Activated CD8-positive, alpha-beta memory T cell treated with anti-CD3 and anti-CD28 coated beads, Interleukin-2, amount 10 ng/mL, durations not matched to agents 7 days and 5 days (primary cell): ENCODE measurements at regions of chr17 and their contacts with region 1.

Region 1: GRCh38 chr17:74368092-74369081 is 1.1 kb downstream of the GPR142 start:
- DNase-seq: peak; percentile 78
- ATAC-seq: peak; percentile 75
- H3K4me3 Mint-ChIP-seq: no peak overlapping the region
- H3K27ac Mint-ChIP-seq: no peak overlapping the region
- H3K4me1 Mint-ChIP-seq: peaks cover 12% of the 10 kb centered on the region
- H3K27me3 Mint-ChIP-seq: peaks cover under 1% of the 10 kb centered on the region

Region 2: DNA sequence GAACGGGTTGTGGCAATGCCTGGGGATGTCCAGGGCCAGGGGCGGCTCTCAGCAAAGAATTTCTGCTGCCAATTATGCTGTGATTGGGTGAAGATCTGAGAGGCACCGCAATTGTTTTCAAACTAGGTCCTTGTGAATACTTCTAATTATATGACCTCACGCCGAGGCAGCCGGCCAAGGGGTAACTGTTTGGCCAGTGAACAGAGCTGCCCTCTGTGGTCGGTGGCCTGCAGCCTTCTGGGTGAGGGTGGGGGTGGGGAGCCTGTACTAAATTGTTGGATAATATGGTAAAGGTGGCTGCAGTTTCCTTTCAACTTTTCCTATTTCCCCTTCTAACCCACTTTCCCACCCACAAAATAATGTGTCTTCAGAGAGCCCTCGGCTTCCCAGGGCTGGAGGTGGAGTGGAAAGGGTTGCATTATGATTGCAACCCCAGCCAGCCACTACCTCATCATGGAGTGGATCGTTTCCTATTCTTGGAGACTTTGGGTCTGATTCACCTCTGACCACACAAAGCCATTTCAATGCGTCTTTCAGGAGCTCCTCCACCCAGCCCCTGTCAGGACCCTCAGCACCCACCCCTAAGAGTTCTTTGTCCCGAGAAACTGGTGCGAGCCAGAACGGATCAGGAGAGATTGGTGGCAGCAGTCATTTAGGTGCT is 96.4 kb before region 1 on chr17:
- CTCF ChIA-PET with region 1: no interaction called
- DNase-seq: no peak
- ATAC-seq: no peak
- H3K4me3 Mint-ChIP-seq: no peak overlapping the region
- H3K27ac Mint-ChIP-seq: no peak overlapping the region
- H3K4me1 Mint-ChIP-seq: peaks cover 25% of the 10 kb centered on the region
- H3K27me3 Mint-ChIP-seq: peaks cover 10% of the 10 kb centered on the region

Region 3: DNA sequence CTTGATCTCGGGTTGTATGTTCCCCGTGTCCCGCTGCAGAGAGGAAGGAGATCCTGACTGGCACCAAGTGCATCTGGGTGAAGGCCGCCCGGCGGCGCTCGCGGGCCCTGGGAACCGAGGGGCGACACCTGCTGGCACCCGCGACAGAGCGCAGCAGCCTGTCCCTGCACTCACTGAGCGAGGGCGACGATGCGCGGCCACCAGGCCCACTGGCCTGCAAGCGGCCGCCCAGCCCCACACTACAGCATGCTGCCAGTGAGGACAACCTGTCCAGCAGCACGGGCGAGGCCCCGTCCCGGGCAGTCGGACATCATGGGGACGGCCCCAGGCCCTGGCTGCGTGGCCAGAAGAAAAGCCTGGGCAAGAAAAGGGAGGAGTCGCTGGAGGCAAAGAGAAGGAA is 14.3 kb before region 1 on chr17:
- CTCF ChIA-PET with region 1: interaction called, 50 read pairs
- DNase-seq: peak; percentile 77
- ATAC-seq: peak; percentile 78
- H3K4me3 Mint-ChIP-seq: no peak overlapping the region
- H3K27ac Mint-ChIP-seq: no peak overlapping the region
- H3K4me1 Mint-ChIP-seq: peaks cover 10% of the 10 kb centered on the region
- H3K27me3 Mint-ChIP-seq: peaks cover 78% of the 10 kb centered on the region

Region 4: GRCh38 chr17:74437702-74438101 is 69.3 kb after region 1 on chr17:
- CTCF ChIA-PET with region 1: interaction called, 11 read pairs
- DNase-seq: no peak
- ATAC-seq: no peak
- H3K4me3 Mint-ChIP-seq: no peak overlapping the region
- H3K27ac Mint-ChIP-seq: no peak overlapping the region
- H3K4me1 Mint-ChIP-seq: peaks cover 2% of the 10 kb centered on the region
- H3K27me3 Mint-ChIP-seq: peaks cover 40% of the 10 kb centered on the region

Region 5: GRCh38 chr17:74485022-74485743 is 116.8 kb after region 1 on chr17:
- CTCF ChIA-PET with region 1: interaction called, 28 read pairs
- DNase-seq: no peak
- ATAC-seq: no peak
- H3K4me3 Mint-ChIP-seq: no peak overlapping the region
- H3K27ac Mint-ChIP-seq: no peak overlapping the region
- H3K4me1 Mint-ChIP-seq: peaks cover 1% of the 10 kb centered on the region
- H3K27me3 Mint-ChIP-seq: no peaks in the 10 kb centered on the region

Region 6: DNA sequence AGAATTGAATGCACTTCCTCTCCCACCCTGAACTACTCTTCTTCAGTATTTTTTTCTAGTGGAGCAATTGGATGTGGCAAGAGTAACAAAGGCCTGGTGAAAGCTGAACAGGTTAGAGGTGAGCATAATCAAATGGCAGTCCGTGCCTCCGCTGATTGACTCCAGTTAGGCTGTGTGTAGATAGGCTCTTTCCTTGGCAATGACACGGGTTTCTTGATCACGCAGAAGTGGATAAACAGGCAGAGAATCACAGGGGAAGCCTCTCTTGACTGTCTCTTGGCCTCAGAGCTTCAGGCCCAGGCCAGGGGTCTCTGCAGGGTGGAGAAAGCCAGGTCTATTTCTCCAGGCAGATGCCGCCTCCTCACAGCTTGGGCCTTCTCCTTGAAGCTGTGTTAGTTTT is 158.7 kb after region 1 on chr17:
- CTCF ChIA-PET with region 1: interaction called, 27 read pairs
- DNase-seq: peak; percentile 29
- ATAC-seq: no peak
- H3K4me3 Mint-ChIP-seq: no peak overlapping the region
- H3K27ac Mint-ChIP-seq: no peak overlapping the region
- H3K4me1 Mint-ChIP-seq: no peaks in the 10 kb centered on the region
- H3K27me3 Mint-ChIP-seq: peaks cover 31% of the 10 kb centered on the region

Region 7: DNA sequence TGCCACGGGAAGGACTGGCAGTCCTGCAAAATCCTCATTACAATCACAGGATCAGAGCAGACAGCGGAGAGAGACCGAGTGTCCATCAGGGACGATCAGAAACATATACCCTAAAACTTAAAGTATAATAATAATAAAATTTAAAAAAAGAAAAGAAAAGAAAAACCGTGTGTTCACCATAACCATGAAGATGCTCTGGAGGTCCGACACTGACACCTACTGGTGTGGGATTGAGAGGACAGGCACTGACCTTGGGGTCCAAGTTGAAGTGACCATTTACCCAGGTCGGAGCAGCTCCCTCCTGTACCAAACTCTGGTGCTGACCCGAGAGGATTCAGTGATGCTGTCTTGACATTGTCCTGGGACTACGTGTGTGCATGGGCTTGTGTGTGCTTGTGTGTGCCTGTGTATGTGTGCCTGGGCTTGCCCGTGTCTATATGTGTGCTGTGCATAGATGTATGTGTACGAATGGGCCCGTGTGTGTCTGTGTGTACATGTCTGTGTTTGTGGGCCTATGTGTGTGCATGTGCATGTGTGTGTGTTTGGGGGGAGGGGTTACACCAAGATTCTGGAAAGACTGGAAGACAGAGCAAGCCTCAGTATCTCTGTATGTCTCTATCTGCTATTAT is 233.7 kb after region 1 on chr17:
- CTCF ChIA-PET with region 1: interaction called, 15 read pairs
- DNase-seq: peak; percentile 61
- ATAC-seq: peak; percentile 40
- H3K4me3 Mint-ChIP-seq: no peak overlapping the region
- H3K27ac Mint-ChIP-seq: no peak overlapping the region
- H3K4me1 Mint-ChIP-seq: peaks cover 30% of the 10 kb centered on the region
- H3K27me3 Mint-ChIP-seq: peaks cover 51% of the 10 kb centered on the region